ENCODE measurements at regions of chr15 and their contacts with region 1.

Region 1: DNA sequence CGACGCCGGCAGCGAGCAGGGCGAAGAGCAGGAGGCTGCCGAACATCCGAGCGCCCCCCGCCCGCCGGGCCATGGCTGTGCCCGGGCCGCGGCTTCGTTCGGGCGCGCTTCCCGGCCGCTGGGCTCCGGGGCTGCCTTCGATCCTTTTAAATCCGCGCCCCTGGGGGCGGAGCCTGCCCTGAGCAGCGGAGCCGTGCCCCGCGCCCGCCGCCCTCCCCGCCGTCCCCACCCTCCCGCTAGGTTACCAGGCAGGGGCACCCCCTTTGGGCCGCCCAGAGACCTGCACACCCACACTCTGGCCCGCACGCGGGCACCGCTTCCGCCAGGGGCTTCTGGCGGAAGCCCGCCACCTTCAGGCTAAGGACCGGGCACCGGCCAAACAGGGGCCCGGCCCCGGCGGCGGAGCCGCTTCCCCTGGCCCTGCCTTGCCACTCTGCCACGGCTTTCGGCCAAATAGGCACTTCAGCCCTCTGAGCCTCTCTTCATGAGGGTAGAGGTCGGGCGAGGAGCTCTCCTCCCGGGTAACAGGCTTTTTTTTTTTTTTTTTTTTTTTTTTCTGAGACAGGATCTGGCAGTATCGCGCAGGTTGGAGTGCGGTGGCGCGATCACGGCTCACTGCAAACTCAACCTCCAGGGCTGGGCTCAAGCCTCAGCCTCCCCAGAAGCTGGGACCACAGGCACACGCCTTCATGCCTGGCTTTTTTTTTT is at the start of gene NMB:
- DNase-seq: peak; percentile 70 to 94 (median 82)
- ATAC-seq: peak; percentile 70
- H3K4me3 ChIP-seq: peak within 1 kb of the TSS; percentile 61
- H3K4me3 Mint-ChIP-seq: peak within 1 kb of the TSS; percentile 86
- H3K27ac ChIP-seq: peak within 1 kb of the TSS in 1 of 2 donors; percentile 65
- H3K27ac Mint-ChIP-seq: peak within 1 kb of the TSS; percentile 73
- H3K4me1 ChIP-seq: peaks cover 42% of the 10 kb centered on the region
- H3K4me1 Mint-ChIP-seq: peaks cover 43% of the 10 kb centered on the region
- H3K27me3 ChIP-seq: no peaks in the 10 kb centered on the region
- H3K27me3 Mint-ChIP-seq: no peaks in the 10 kb centered on the region
- CTCF ChIP-seq: peak; percentile 68
- total RNA-seq, gene NMB: 2.2 to 3.7 TPM

Region 2: GRCh38 chr15:84633311-84634227 is 24.7 kb before region 1 on chr15:
- CTCF ChIA-PET with region 1: interaction called, 5 read pairs
- POLR2A ChIA-PET with region 1: interaction called, 79 read pairs
- intact Hi-C with region 1: loop called (anchors 1 to 2 kb)
- DNase-seq: peak; percentile 43 to 85 (median 60)
- ATAC-seq: peak; percentile 41
- H3K4me3 ChIP-seq: peak overlapping the region; percentile 69
- H3K4me3 Mint-ChIP-seq: peak overlapping the region; percentile 96
- H3K27ac ChIP-seq: peak overlapping the region; percentile 29 to 61
- H3K27ac Mint-ChIP-seq: peak overlapping the region; percentile 92
- H3K4me1 ChIP-seq: peaks cover 41% of the 10 kb centered on the region
- H3K4me1 Mint-ChIP-seq: peaks cover 52% of the 10 kb centered on the region
- H3K27me3 ChIP-seq: no peaks in the 10 kb centered on the region
- H3K27me3 Mint-ChIP-seq: no peaks in the 10 kb centered on the region
- CTCF ChIP-seq: no peak

Region 3: GRCh38 chr15:84734794-84735479 is 76.7 kb after region 1 on chr15:
- CTCF ChIA-PET with region 1: interaction called, 4 read pairs
- POLR2A ChIA-PET with region 1: interaction called, 19 read pairs
- intact Hi-C with region 1: no loop called
- DNase-seq: peak; percentile 40 to 91 (median 64)
- ATAC-seq: peak; percentile 86
- H3K4me3 ChIP-seq: peak overlapping the region; percentile 34
- H3K4me3 Mint-ChIP-seq: peak overlapping the region; percentile 84
- H3K27ac ChIP-seq: peak overlapping the region; percentile 46 to 70
- H3K27ac Mint-ChIP-seq: peak overlapping the region; percentile 91
- H3K4me1 ChIP-seq: peaks cover 51% of the 10 kb centered on the region
- H3K4me1 Mint-ChIP-seq: peaks cover 51% of the 10 kb centered on the region
- H3K27me3 ChIP-seq: no peaks in the 10 kb centered on the region
- H3K27me3 Mint-ChIP-seq: no peaks in the 10 kb centered on the region
- CTCF ChIP-seq: no peak

Region 4: DNA sequence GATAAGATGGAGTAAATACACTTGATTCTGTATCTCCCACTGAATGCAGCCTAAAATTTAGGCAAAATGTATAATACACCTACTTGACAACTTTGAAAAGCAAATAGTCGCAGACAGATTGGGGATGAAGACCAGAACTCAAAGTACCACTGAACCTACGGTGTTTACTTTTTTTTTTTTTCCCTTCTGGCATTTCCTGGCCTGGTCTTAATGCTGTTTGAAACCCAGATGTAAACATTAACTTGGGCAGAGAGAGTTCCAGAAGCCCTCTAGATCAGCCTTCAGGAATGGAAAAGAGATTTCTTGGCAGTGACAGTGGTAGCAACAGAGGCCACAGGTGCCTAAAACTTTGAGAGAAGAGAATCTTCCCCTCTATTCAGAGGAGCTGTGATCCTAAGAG is 186.7 kb after region 1 on chr15:
- CTCF ChIA-PET with region 1: no interaction called
- POLR2A ChIA-PET with region 1: no interaction called
- intact Hi-C with region 1: no loop called
- DNase-seq: no peak
- ATAC-seq: no peak
- H3K4me3 ChIP-seq: no peak overlapping the region
- H3K4me3 Mint-ChIP-seq: no peak overlapping the region
- H3K27ac ChIP-seq: no peak overlapping the region
- H3K27ac Mint-ChIP-seq: no peak overlapping the region
- H3K4me1 ChIP-seq: no peaks in the 10 kb centered on the region
- H3K4me1 Mint-ChIP-seq: no peaks in the 10 kb centered on the region
- H3K27me3 ChIP-seq: no peaks in the 10 kb centered on the region
- H3K27me3 Mint-ChIP-seq: peaks cover 6% of the 10 kb centered on the region
- CTCF ChIP-seq: no peak

Region 5: GRCh38 chr15:84874981-84875699 is 216.9 kb after region 1 on chr15:
- CTCF ChIA-PET with region 1: no interaction called
- POLR2A ChIA-PET with region 1: no interaction called
- intact Hi-C with region 1: loop called (anchors 1 to 2 kb)
- DNase-seq: no peak
- ATAC-seq: no peak
- H3K4me3 ChIP-seq: no peak overlapping the region
- H3K4me3 Mint-ChIP-seq: no peak overlapping the region
- H3K27ac ChIP-seq: no peak overlapping the region
- H3K27ac Mint-ChIP-seq: no peak overlapping the region
- H3K4me1 ChIP-seq: no peaks in the 10 kb centered on the region
- H3K4me1 Mint-ChIP-seq: no peaks in the 10 kb centered on the region
- H3K27me3 ChIP-seq: no peaks in the 10 kb centered on the region
- H3K27me3 Mint-ChIP-seq: no peaks in the 10 kb centered on the region
- CTCF ChIP-seq: no peak

Region 6: DNA sequence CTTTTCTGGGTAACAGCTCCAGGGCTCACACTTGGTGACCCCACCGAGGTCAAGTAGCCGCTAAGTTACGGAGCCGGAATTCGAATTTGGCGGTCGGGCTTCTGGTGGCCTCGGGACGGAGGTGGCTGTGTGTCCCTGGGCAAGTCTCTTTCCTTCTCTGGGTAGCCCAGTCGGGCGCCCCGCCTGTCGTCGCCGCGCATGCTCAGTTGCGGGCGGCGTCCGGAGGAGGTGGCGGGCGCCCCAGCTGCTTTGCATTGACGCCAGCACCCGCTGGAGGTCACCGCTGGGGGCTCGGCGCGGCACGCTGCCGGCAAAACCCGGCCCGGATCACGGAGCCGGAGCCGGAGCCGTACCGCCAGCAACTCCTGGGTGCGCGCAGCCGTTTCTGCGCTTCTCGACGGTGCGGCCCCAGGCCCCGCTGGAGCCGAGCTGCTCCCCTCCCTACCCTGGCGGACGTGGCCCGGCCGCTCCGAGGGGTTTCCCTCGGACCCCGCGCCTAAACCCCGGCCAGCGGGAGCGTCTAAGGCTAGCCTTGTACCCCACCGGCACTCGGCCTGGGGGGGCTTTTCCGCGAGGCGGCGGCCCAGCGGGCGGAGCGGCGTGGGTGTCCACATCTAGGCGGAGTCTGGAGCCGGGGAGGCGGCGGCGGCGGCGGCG is 322.9 kb after region 1 on chr15:
- CTCF ChIA-PET with region 1: interaction called, 3 read pairs
- POLR2A ChIA-PET with region 1: interaction called, 10 read pairs
- intact Hi-C with region 1: loop called in 1 of 2 experiments (anchors 5 kb)
- DNase-seq: peak; percentile 90 to 99 (median 95)
- ATAC-seq: peak; percentile 69
- H3K4me3 ChIP-seq: peak overlapping the region; percentile 98
- H3K4me3 Mint-ChIP-seq: peak overlapping the region; percentile 98
- H3K27ac ChIP-seq: peak overlapping the region; percentile 74 to 93
- H3K27ac Mint-ChIP-seq: peak overlapping the region; percentile 95
- H3K4me1 ChIP-seq: peaks cover 32% of the 10 kb centered on the region
- H3K4me1 Mint-ChIP-seq: peaks cover 52% of the 10 kb centered on the region
- H3K27me3 ChIP-seq: no peaks in the 10 kb centered on the region
- H3K27me3 Mint-ChIP-seq: no peaks in the 10 kb centered on the region
- CTCF ChIP-seq: peak; percentile 31